IMR-90 (cell line): ENCODE measurements at regions of chr7 and their contacts with region 1.

Region 1: GRCh38 chr7:17408245-17408903 is 109.9 kb downstream of the AHR start:
- DNase-seq: peak; percentile 95
- ATAC-seq: peak; percentile 82
- H3K4me3 ChIP-seq: no peak overlapping the region
- H3K27ac ChIP-seq: peak overlapping the region; percentile 74
- H3K4me1 ChIP-seq: peaks cover 13% of the 10 kb centered on the region
- H3K27me3 ChIP-seq: no peaks in the 10 kb centered on the region
- CTCF ChIP-seq: no peak
- POLR2A ChIP-seq: no peak
- RAD21 ChIP-seq: no peak

Region 2: GRCh38 chr7:16989811-16990413 is 418.5 kb before region 1 on chr7:
- CTCF ChIA-PET with region 1: no interaction called
- POLR2A ChIA-PET with region 1: no interaction called
- dilution Hi-C with region 1: no loop called
- in situ Hi-C with region 1: no loop called
- intact Hi-C with region 1: loop called (anchors 5 kb)
- DNase-seq: peak; percentile 80
- ATAC-seq: peak; percentile 94
- H3K4me3 ChIP-seq: peak overlapping the region; percentile 6; the same call in 1 of the 2 replicates
- H3K27ac ChIP-seq: peak overlapping the region; percentile 66
- H3K4me1 ChIP-seq: no peaks in the 10 kb centered on the region; the same call in 1 of the 2 replicates
- H3K27me3 ChIP-seq: no peaks in the 10 kb centered on the region
- CTCF ChIP-seq: no peak
- POLR2A ChIP-seq: no peak
- RAD21 ChIP-seq: no peak

Region 3: DNA sequence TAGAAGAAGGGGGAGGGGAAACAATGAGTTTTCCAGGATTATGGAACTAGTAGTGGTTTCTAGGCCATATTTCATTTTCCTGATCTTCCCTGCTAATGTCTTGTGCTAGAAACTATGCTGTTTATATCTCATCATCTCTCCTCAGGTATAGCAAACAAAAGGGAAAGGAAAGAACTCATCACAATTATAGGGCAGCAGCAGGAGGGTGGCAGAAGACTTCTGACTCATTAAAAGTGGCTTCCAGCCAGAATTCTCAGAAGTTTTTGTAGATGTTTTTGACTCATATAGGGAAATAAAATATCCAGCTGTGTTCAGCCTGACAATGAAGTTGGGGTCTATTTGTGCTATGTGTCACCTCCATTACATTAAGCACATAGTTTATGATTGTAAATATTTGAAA is 103.4 kb before region 1 on chr7:
- CTCF ChIA-PET with region 1: no interaction called
- POLR2A ChIA-PET with region 1: no interaction called
- dilution Hi-C with region 1: no loop called
- in situ Hi-C with region 1: no loop called
- intact Hi-C with region 1: loop called (anchors 5 kb)
- DNase-seq: peak; percentile 88
- ATAC-seq: peak; percentile 24; the same call in 1 of the 2 replicates
- H3K4me3 ChIP-seq: no peak overlapping the region
- H3K27ac ChIP-seq: no peak overlapping the region
- H3K4me1 ChIP-seq: peaks cover 17% of the 10 kb centered on the region
- H3K27me3 ChIP-seq: no peaks in the 10 kb centered on the region
- CTCF ChIP-seq: no peak
- POLR2A ChIP-seq: no peak
- RAD21 ChIP-seq: no peak

Region 4: DNA sequence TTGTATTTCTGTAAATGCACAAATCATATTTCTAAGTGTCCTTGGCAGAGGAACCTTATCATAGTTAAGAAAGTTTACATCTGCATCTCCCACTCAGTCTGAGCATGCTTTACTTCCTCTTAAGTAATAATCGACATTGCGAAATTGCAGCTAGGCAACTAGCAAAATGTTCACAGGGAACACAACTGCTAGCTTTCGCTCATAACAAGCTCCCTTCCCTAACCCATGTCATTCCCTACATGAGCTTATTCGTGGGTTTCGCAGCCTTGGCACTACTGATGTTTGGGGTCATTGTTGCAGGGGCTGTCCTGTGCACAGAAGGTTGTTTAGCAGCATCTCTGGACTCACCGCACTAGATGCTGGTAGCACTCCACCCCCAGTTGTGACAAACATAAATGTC is 38.3 kb before region 1 on chr7:
- CTCF ChIA-PET with region 1: interaction called, 4 read pairs
- POLR2A ChIA-PET with region 1: no interaction called
- dilution Hi-C with region 1: no loop called
- in situ Hi-C with region 1: no loop called
- intact Hi-C with region 1: loop called (anchors 1 kb)
- DNase-seq: peak; percentile 97
- ATAC-seq: peak; percentile 55
- H3K4me3 ChIP-seq: no peak overlapping the region
- H3K27ac ChIP-seq: peak overlapping the region; percentile 99
- H3K4me1 ChIP-seq: peaks cover 27% of the 10 kb centered on the region
- H3K27me3 ChIP-seq: no peaks in the 10 kb centered on the region
- CTCF ChIP-seq: no peak
- POLR2A ChIP-seq: no peak
- RAD21 ChIP-seq: no peak

Region 5: DNA sequence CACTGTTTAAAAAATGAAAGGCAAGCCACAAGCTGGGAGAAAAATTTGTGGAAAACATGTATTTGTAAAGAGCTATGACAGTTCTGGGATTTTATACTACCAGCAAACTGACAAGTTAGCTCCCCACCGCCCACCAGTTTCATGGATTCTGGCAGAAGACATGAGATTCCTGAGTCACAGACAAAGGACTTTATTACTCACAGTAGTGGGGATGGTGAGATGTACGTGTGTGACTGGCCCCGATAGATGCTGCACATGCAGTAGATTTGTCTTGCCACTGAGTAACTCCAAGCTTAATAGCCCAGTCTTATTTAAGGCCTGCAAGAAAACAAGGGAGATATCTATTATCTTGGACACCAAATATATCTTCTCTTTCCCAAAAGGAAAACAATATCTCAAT is 171.8 kb after region 1 on chr7:
- CTCF ChIA-PET with region 1: no interaction called
- POLR2A ChIA-PET with region 1: no interaction called
- dilution Hi-C with region 1: no loop called
- in situ Hi-C with region 1: no loop called
- intact Hi-C with region 1: no loop called
- DNase-seq: peak; percentile 94
- ATAC-seq: peak; percentile 63
- H3K4me3 ChIP-seq: no peak overlapping the region
- H3K27ac ChIP-seq: no peak overlapping the region
- H3K4me1 ChIP-seq: peaks cover 2% of the 10 kb centered on the region
- H3K27me3 ChIP-seq: no peaks in the 10 kb centered on the region
- CTCF ChIP-seq: no peak
- POLR2A ChIP-seq: no peak
- RAD21 ChIP-seq: no peak